ENCODE measurements at regions of chr7 and their contacts with region 1.

Region 1: DNA sequence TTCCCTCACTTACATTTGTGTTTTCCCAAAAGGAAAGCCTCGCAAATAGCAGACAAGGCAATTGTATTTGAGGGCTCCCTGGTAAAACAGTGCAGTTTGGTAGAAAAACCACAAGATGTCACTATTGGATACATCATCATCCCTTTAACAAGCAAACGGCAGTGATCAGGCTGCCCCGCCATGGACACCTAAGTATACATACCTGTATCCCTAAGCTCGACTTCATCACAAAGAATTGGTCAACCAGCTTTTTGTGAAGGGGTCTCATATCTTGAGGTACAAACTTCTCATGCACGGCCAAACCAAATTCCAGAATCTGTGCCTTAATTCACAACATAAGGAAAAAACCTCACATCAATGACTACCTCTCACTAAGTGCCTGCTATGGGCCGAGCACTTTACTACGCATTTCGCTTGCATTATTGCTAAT is 179.5 kb upstream of the IMMP2L start:
- DNase-seq: peak; percentile 79
- H3K4me3 ChIP-seq: no peak overlapping the region; a peak in 1 of 4 replicates
- H3K27ac ChIP-seq: no peak overlapping the region
- H3K4me1 ChIP-seq: peaks cover 0 to 4% of the 10 kb centered on the region in 2 experiments; a peak in 2 of 4 replicates
- H3K27me3 ChIP-seq: no peaks in the 10 kb centered on the region
- CTCF ChIP-seq: peak; percentile 92
- EP300 ChIP-seq: no peak
- RAD21 ChIP-seq: peak; percentile 96

Region 2: DNA sequence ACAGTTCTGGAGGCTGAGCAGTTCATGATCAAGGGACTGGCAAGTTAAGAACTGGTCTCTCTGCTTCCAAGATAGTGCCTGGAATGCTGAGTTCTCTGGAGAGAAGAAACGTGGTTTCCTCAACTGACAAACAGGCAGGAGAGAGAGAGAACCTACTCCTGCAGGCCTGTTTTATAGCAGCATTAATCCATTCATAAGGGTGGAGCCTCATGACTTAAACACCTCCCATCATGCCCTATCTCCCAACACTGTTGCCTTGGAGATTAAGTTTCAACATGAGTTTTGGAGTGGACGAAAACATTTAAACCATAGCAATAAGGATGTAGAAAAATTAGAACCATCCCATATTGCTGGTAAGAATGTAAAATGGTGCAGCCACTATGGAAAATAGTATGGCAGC is 147.2 kb before region 1 on chr7:
- CTCF ChIA-PET with region 1: no interaction called
- POLR2A ChIA-PET with region 1: no interaction called
- DNase-seq: no peak
- H3K4me3 ChIP-seq: no peak overlapping the region
- H3K27ac ChIP-seq: no peak overlapping the region
- H3K4me1 ChIP-seq: no peaks in the 10 kb centered on the region; a peak in 1 of 4 replicates
- H3K27me3 ChIP-seq: no peaks in the 10 kb centered on the region
- CTCF ChIP-seq: no peak
- EP300 ChIP-seq: no peak
- RAD21 ChIP-seq: no peak

Region 3: GRCh38 chr7:111622082-111622481 is 119.7 kb before region 1 on chr7:
- CTCF ChIA-PET with region 1: no interaction called
- POLR2A ChIA-PET with region 1: no interaction called
- DNase-seq: no peak
- H3K4me3 ChIP-seq: no peak overlapping the region
- H3K27ac ChIP-seq: no peak overlapping the region
- H3K4me1 ChIP-seq: no peaks in the 10 kb centered on the region
- H3K27me3 ChIP-seq: no peaks in the 10 kb centered on the region; the same call in 1 of the 2 replicates
- CTCF ChIP-seq: no peak
- EP300 ChIP-seq: no peak
- RAD21 ChIP-seq: no peak

Region 4: DNA sequence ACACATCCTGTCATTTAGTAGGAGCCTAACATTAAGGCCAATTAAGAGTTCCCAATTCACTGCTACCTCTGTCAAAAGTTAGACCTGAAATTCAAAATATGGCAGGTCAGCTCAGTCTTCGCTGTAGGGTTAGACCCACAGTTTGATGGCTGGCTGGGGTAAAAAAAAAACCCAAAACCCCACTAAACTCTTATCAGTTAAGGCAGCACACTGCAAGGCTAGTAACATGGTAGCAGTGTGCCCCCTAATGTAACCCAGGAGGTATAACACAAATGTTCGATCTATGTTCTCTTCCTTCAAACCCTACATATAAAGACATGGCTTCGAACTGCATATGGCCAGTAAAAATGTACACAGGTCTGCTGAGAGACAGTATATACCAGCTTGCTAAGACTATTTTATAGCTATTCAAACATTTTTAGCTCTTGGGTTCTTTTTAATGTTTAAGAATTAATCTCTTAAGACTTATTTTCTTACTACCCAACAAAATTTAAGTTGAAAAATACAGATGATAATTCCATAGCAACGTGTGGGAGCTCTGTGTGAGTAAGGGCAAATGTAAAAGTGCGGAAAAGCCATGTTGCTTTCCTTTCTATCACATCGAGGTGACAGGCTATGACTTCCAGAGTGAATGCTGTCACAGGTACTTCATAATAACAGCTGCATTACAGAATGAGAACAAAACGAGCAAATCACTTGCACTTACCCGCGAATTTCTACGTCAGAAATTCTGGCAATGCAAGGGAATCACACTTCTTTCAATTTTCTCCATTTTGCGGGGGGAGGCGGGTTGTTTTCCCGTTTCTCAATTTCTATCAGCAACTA is 11.1 kb before region 1 on chr7:
- CTCF ChIA-PET with region 1: interaction called, 16 read pairs
- POLR2A ChIA-PET with region 1: no interaction called
- DNase-seq: peak; percentile 71
- H3K4me3 ChIP-seq: no peak overlapping the region
- H3K27ac ChIP-seq: peak overlapping the region in 1 of 2 experiments; percentile 67; a peak in 2 of 4 replicates
- H3K4me1 ChIP-seq: peaks cover 0 to 24% of the 10 kb centered on the region in 2 experiments; a peak in 2 of 4 replicates
- H3K27me3 ChIP-seq: no peaks in the 10 kb centered on the region
- CTCF ChIP-seq: peak; percentile 78
- EP300 ChIP-seq: no peak
- RAD21 ChIP-seq: peak; percentile 91

Region 5: DNA sequence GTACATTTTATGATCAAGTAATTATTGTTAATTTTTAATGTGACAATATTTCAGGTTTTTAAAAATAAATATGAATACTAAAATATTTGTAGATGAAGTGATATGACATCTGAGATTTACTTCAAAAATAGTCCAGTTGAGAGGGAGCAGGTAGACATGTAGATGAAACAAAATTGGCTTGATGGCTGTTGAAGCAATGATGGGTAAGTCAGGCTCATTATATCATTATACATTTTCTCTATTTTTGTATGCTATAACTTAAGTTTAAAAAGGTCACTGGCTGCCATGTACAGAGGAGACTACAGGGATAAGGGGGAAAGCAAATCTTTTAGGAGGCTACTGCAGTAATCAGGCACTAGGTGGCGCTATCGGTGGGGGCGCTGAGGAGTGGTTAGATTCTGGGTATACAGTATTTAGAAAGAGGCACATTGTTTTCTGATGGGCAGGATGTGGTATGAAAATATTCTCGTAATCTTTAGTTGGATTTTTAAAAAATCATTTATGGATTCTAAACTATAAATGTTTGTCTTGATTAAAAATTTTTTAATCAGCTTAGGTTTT is 10.3 kb after region 1 on chr7:
- CTCF ChIA-PET with region 1: interaction called, 86 read pairs
- POLR2A ChIA-PET with region 1: no interaction called
- DNase-seq: peak; percentile 72
- H3K4me3 ChIP-seq: peak overlapping the region in 1 of 2 experiments; percentile 28; a peak in 1 of 4 replicates
- H3K27ac ChIP-seq: no peak overlapping the region
- H3K4me1 ChIP-seq: peaks cover 0 to 10% of the 10 kb centered on the region in 2 experiments; a peak in 2 of 4 replicates
- H3K27me3 ChIP-seq: no peaks in the 10 kb centered on the region
- CTCF ChIP-seq: peak; percentile 100
- EP300 ChIP-seq: no peak
- RAD21 ChIP-seq: peak; percentile 78

Region 6: GRCh38 chr7:111827863-111828504 is 86.2 kb after region 1 on chr7:
- CTCF ChIA-PET with region 1: no interaction called
- POLR2A ChIA-PET with region 1: no interaction called
- DNase-seq: no peak
- H3K4me3 ChIP-seq: no peak overlapping the region
- H3K27ac ChIP-seq: peak overlapping the region in 1 of 2 experiments; percentile 2; a peak in 1 of 4 replicates
- H3K4me1 ChIP-seq: peaks cover 3 to 10% of the 10 kb centered on the region in 2 experiments; a peak in 2 of 4 replicates
- H3K27me3 ChIP-seq: no peaks in the 10 kb centered on the region
- CTCF ChIP-seq: no peak
- EP300 ChIP-seq: no peak
- RAD21 ChIP-seq: no peak

Region 7: GRCh38 chr7:112067632-112068540 is 326.1 kb after region 1 on chr7:
- CTCF ChIA-PET with region 1: no interaction called
- POLR2A ChIA-PET with region 1: no interaction called
- DNase-seq: no peak
- H3K4me3 ChIP-seq: no peak overlapping the region
- H3K27ac ChIP-seq: peak overlapping the region in 1 of 2 experiments; percentile 58; a peak in 2 of 4 replicates
- H3K4me1 ChIP-seq: peaks cover 0 to 19% of the 10 kb centered on the region in 2 experiments; a peak in 2 of 4 replicates
- H3K27me3 ChIP-seq: no peaks in the 10 kb centered on the region
- CTCF ChIP-seq: no peak
- EP300 ChIP-seq: no peak
- RAD21 ChIP-seq: no peak

Region 8: DNA sequence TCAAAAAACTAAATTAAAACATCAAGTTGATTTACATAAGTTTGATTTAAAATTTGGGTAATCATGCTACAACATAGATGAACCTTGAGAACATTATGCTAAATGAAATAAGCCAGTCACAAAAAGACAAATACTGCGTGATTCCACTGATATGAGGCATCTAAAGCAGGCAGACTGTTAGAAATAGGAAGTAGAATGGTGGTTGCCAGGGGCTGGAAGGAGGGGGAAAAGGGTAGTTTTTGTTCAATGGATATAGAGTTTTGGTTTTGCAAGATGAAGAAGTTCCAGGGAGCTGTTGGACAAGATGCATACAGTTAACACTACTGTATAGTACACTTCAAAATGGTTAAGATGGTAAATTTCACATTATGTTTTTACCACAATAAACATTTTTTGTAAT is 663.5 kb after region 1 on chr7:
- CTCF ChIA-PET with region 1: interaction called, 18 read pairs
- POLR2A ChIA-PET with region 1: no interaction called
- DNase-seq: no peak
- H3K4me3 ChIP-seq: no peak overlapping the region
- H3K27ac ChIP-seq: no peak overlapping the region
- H3K4me1 ChIP-seq: no peaks in the 10 kb centered on the region; a peak in 1 of 4 replicates
- H3K27me3 ChIP-seq: no peaks in the 10 kb centered on the region
- CTCF ChIP-seq: no peak
- EP300 ChIP-seq: no peak
- RAD21 ChIP-seq: no peak

Region 9: GRCh38 chr7:112414855-112415490 is 673.1 kb after region 1 on chr7:
- CTCF ChIA-PET with region 1: interaction called, 35 read pairs
- POLR2A ChIA-PET with region 1: no interaction called
- DNase-seq: peak; percentile 57
- H3K4me3 ChIP-seq: no peak overlapping the region
- H3K27ac ChIP-seq: no peak overlapping the region
- H3K4me1 ChIP-seq: peaks cover 0 to 11% of the 10 kb centered on the region in 2 experiments; a peak in 2 of 4 replicates
- H3K27me3 ChIP-seq: no peaks in the 10 kb centered on the region
- CTCF ChIP-seq: peak; percentile 85
- EP300 ChIP-seq: no peak
- RAD21 ChIP-seq: peak; percentile 84

Region 10: GRCh38 chr7:112495810-112496462 is 754.1 kb after region 1 on chr7:
- CTCF ChIA-PET with region 1: interaction called, 28 read pairs
- POLR2A ChIA-PET with region 1: no interaction called
- DNase-seq: peak; percentile 57
- H3K4me3 ChIP-seq: no peak overlapping the region
- H3K27ac ChIP-seq: peak overlapping the region; percentile 35 to 70; a peak in 2 of 4 replicates
- H3K4me1 ChIP-seq: peaks cover 5 to 11% of the 10 kb centered on the region in 2 experiments; a peak in 3 of 4 replicates
- H3K27me3 ChIP-seq: no peaks in the 10 kb centered on the region
- CTCF ChIP-seq: peak; percentile 83
- EP300 ChIP-seq: no peak
- RAD21 ChIP-seq: peak; percentile 90

Measured in SK-N-SH (cell line).